A549 (cell line): ENCODE measurements at regions of chr3 and their contacts with region 1.

Region 1: DNA sequence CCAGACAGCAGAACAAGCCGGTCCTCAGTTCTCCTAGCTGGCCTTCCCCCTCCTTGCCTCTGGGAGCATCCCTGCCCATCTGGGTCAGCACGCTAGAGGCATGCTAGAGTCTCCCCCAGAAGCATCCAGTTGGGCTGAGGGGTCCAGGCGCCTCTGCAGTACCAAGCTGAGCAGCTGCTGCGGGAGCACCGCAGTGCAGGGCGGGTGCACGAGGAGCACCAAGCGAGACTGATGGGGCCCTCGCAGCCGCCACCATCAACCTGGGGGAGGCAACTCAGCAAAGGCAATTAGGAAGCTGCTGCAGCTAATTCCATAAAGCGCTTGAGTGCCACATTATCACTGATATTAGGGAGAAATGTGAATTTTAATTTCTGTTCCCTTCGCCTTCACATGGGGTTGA is 12.4 kb downstream of the CACNA2D3 start:
- DNase-seq: no peak
- ATAC-seq: no peak
- H3K4me3 ChIP-seq: no peak overlapping the region
- H3K27ac ChIP-seq: no peak overlapping the region
- H3K4me1 ChIP-seq: no peaks in the 10 kb centered on the region
- CTCF ChIP-seq: no peak
- EP300 ChIP-seq: no peak
- POLR2A ChIP-seq: no peak
- RAD21 ChIP-seq: no peak

Region 2: DNA sequence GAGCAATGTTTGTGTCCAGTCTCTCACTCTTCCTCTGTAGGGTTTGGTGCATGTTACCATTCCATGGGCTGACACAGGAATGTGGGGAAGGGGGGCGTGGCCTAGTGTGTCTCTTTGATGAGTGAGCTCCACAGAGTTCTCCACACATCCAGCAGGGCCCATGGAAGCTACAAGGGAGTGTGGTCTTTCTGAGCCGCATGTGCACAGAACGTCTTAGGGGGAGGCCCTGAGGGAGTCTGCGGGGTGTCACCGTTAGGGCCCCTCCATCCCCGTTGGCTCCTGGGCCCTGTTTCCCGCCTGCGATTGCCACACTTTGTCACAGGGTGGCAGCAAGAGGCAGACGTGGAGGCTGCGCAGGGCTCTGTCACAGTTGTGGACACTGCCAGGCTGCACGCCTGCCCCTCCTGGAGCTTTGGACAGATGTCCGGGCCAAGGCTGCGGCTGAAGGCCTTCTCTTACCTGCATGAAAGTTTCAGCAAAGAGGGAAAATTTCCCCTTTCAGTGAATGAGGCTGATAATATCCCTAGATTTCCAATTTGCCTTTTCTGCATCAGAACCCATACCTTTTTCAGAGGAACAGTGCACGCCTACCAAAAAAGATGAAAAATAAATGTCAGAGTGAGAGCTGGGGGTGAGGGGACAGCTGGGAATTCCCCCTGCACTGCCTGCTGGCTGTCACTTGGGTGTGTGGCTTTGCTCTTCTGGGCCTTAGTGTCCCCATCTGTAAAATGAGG is 12.0 kb after region 1 on chr3:
- CTCF ChIA-PET with region 1: interaction called, 11 read pairs
- POLR2A ChIA-PET with region 1: no interaction called
- DNase-seq: peak; percentile 27 to 36
- ATAC-seq: peak; percentile 89 to 95
- H3K4me3 ChIP-seq: no peak overlapping the region
- H3K27ac ChIP-seq: no peak overlapping the region
- H3K4me1 ChIP-seq: no peaks in the 10 kb centered on the region
- CTCF ChIP-seq: peak; percentile 29
- EP300 ChIP-seq: no peak
- POLR2A ChIP-seq: no peak
- RAD21 ChIP-seq: peak; percentile 64 to 74